Activated CD8-positive, alpha-beta T cell treated with anti-CD3 and anti-CD28 coated beads, Interleukin-2, amount 10 ng/mL, durations not matched to agents 7 days and 5 days (primary cell): ENCODE measurements at regions of chr15 and their contacts with region 1.

Region 1: GRCh38 chr15:50116473-50116872 is 2.6 kb downstream of the ATP8B4 start:
- DNase-seq: peak; percentile 37
- ATAC-seq: no peak
- H3K4me3 Mint-ChIP-seq: peak overlapping the region; percentile 66
- H3K27ac Mint-ChIP-seq: peak overlapping the region; percentile 23
- H3K4me1 Mint-ChIP-seq: peaks cover 73% of the 10 kb centered on the region
- H3K27me3 Mint-ChIP-seq: no peaks in the 10 kb centered on the region

Region 2: DNA sequence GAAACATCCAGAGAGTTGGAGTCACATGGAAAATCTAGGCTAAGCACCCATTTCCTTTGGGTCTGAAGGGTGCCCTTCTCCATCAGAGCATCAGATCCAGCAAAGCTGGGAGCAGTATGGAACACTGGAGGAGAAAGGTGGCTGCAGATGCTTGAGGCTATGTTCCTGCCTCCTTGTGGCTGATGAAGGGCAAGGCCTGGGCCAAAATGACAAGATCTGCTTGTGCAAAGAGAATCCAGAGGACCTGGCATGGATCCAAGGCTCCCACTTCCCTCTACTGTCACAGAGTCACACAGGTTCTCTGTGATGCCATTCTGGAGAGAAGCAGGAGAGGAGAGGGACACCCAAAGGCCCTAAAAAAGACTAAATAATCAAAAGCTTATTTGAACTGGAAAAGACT is 11.8 kb after region 1 on chr15:
- CTCF ChIA-PET with region 1: interaction called, 14 read pairs
- POLR2A ChIA-PET with region 1: interaction called, 4 read pairs
- DNase-seq: no peak
- ATAC-seq: no peak
- H3K4me3 Mint-ChIP-seq: no peak overlapping the region
- H3K27ac Mint-ChIP-seq: no peak overlapping the region
- H3K4me1 Mint-ChIP-seq: peaks cover 3% of the 10 kb centered on the region
- H3K27me3 Mint-ChIP-seq: no peaks in the 10 kb centered on the region

Region 3: DNA sequence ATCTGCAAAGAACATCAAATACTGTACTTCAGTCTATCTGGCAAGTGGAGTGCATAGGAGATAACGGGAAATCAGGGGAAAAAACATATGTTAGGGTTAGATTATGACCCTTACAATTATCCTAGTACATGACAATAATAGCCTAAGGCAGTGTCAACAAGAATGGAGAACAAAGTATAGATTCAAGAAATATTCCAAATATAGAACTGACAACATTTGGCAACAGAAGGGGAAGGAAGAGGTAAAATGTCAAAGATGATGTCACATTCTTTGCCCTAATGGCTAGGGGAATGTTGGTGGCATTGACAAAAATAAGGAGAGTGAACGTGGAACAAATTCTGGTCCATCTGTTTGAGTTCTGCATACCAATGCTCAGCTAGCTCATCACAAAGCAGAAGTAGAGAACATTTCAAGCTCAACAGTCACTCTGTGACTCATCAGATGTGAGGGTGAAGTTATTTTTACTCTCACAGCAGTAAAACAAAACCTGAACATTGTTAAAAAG is 18.1 kb after region 1 on chr15:
- CTCF ChIA-PET with region 1: interaction called, 26 read pairs
- POLR2A ChIA-PET with region 1: interaction called, 11 read pairs
- DNase-seq: no peak
- ATAC-seq: peak; percentile 56
- H3K4me3 Mint-ChIP-seq: no peak overlapping the region
- H3K27ac Mint-ChIP-seq: peak overlapping the region; percentile 83
- H3K4me1 Mint-ChIP-seq: peaks cover 40% of the 10 kb centered on the region
- H3K27me3 Mint-ChIP-seq: no peaks in the 10 kb centered on the region